PC-3 (cell line): ENCODE measurements at regions of chr1 and their contacts with region 1.

Region 1: DNA sequence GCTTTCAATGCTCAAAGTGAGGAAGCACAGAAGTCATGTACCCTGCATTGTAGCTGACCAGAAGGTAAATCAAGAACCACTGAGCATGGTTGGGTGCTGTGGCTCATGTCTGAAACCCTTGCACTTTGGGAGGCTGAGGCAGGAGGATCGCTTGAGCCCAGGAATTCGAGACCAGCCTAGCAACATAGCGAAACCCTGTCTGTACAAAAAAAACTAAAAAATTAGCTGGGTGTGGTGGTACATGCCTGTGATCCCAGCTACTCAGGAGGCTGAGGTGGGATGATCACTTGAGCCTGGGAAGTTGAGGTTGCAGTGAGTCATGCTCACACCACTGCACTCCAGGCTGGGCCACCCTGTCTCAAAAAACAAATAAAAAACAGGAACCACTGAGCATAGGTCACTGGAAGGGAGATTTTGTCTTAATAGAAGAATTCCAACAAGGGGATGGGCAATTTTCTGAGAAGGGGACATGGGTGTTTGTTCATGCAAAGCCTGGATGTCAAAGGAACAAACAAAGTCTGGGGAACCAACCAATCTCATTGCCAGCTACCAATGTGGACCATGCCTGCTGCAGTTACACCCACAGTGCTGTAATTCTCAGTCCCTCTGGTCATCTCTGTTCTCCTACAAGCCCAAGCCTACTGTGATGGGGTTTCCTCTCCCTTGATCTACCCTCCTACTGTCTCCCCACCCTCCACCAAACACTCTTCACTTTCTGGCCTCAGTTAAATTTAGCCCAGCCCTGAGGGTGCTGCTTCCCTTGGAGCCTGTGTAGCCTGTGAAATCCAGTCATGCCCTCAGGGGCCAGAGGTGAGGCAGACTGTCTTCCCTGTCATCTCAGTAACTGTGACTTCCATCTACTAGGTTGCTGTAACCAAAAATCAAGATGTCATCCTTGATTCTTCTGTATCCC is 47.9 kb downstream of the ELF3 start:
- DNase-seq: peak; percentile 81
- ATAC-seq: peak; percentile 77
- H3K4me3 ChIP-seq: no peak overlapping the region; the same call in 1 of the 2 replicates
- H3K27ac ChIP-seq: peak overlapping the region; percentile 98
- H3K4me1 ChIP-seq: peaks cover 31% of the 10 kb centered on the region
- H3K27me3 ChIP-seq: no peaks in the 10 kb centered on the region
- CTCF ChIP-seq: no peak

Region 2: GRCh38 chr1:202029171-202029665 is 29.0 kb before region 1 on chr1:
- CTCF ChIA-PET with region 1: no interaction called
- POLR2A ChIA-PET with region 1: no interaction called
- intact Hi-C with region 1: loop called (anchors 1 kb)
- DNase-seq: peak; percentile 88
- ATAC-seq: peak; percentile 92
- H3K4me3 ChIP-seq: no peak overlapping the region
- H3K27ac ChIP-seq: peak overlapping the region; percentile 95
- H3K4me1 ChIP-seq: peaks cover 28% of the 10 kb centered on the region
- H3K27me3 ChIP-seq: no peaks in the 10 kb centered on the region
- CTCF ChIP-seq: no peak

Region 3: DNA sequence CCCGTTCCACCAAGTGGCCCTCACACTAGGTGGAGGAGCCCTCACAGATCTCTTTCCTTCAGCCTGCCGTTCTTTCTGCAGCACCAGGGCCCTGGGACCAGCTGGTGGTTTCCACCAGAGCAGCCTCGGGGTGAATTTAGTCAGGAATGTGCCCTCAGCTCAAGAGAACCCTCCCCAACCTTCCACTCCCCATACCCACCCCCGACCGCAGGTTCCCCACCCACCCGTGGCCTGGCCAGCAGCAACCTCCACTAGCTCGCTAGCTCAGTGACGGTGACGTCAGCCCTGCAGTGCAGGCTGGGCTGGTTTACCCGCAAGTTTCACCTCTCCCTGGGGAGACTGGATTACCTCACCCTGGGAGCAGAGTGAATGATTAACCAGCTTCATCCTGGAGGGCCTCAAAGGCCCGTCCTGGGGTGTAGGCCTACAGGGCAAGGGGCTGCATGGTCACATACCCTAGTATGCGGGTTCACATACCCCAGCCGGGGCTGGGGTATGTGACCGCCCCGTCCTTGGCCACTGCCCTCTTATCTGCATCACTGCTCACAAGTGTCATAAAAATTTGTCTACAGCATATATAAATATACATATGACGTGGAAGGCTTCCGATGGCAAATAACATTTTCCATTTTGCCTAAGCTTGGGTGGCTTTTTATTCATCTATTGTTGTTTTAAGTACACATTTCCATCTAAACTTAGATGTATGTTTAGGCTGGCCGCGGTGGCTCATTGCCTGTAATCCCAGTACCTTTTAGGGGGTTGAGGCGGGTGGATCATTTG is 23.4 kb before region 1 on chr1:
- CTCF ChIA-PET with region 1: interaction called, 3 read pairs
- POLR2A ChIA-PET with region 1: interaction called, 3 read pairs
- intact Hi-C with region 1: loop called (anchors 1 kb)
- DNase-seq: peak; percentile 95
- ATAC-seq: peak; percentile 93
- H3K4me3 ChIP-seq: peak overlapping the region; percentile 28; the same call in 1 of the 2 replicates
- H3K27ac ChIP-seq: peak overlapping the region; percentile 99
- H3K4me1 ChIP-seq: peaks cover 33% of the 10 kb centered on the region
- H3K27me3 ChIP-seq: no peaks in the 10 kb centered on the region
- CTCF ChIP-seq: no peak

Region 4: GRCh38 chr1:202076050-202076511 is 17.8 kb after region 1 on chr1:
- CTCF ChIA-PET with region 1: no interaction called
- POLR2A ChIA-PET with region 1: no interaction called
- intact Hi-C with region 1: no loop called
- DNase-seq: no peak
- ATAC-seq: no peak
- H3K4me3 ChIP-seq: no peak overlapping the region
- H3K27ac ChIP-seq: no peak overlapping the region
- H3K4me1 ChIP-seq: peaks cover 11% of the 10 kb centered on the region
- H3K27me3 ChIP-seq: no peaks in the 10 kb centered on the region
- CTCF ChIP-seq: no peak